Activated B cell treated with CpG ODN at 0.5 μM for 24 hours (primary cell): ENCODE measurements at regions of chr3 and their contacts with region 1.

Region 1: GRCh38 chr3:19263606-19264005 is 115.3 kb downstream of the KCNH8 start:
- DNase-seq: no peak
- ATAC-seq: no peak
- H3K4me3 Mint-ChIP-seq: no peak overlapping the region
- H3K27ac Mint-ChIP-seq: no peak overlapping the region
- H3K4me1 Mint-ChIP-seq: peaks cover 7% of the 10 kb centered on the region
- H3K27me3 Mint-ChIP-seq: no peaks in the 10 kb centered on the region
- CTCF ChIP-seq: no peak

Region 2: GRCh38 chr3:18389108-18389733 is 874.4 kb before region 1 on chr3:
- CTCF ChIA-PET with region 1: no interaction called
- POLR2A ChIA-PET with region 1: no interaction called
- intact Hi-C with region 1: no loop called
- DNase-seq: no peak
- ATAC-seq: no peak
- H3K4me3 Mint-ChIP-seq: no peak overlapping the region
- H3K27ac Mint-ChIP-seq: no peak overlapping the region
- H3K4me1 Mint-ChIP-seq: no peaks in the 10 kb centered on the region
- H3K27me3 Mint-ChIP-seq: no peaks in the 10 kb centered on the region
- CTCF ChIP-seq: peak; percentile 10

Region 3: DNA sequence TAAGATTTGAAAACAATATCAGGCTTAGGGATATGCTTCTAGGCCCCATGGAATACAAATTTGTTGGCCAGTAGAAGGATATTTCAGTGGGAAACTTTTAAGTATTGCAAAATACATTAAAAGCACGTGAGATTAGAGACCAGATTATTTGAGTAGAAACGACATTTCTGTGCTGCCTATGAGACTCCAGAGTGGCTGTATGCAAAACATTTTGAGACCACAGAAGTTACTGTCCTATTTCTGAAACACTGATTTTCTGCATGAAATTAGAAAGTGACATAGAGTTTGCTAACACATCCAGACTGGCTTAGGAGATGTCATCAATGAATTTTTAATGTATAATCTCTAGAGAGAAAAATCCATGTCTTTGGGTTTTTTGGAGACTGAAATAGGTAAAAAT is 15.5 kb before region 1 on chr3:
- CTCF ChIA-PET with region 1: no interaction called
- POLR2A ChIA-PET with region 1: no interaction called
- intact Hi-C with region 1: loop called (anchors 2 kb)
- DNase-seq: no peak
- ATAC-seq: no peak
- H3K4me3 Mint-ChIP-seq: no peak overlapping the region
- H3K27ac Mint-ChIP-seq: no peak overlapping the region
- H3K4me1 Mint-ChIP-seq: peaks cover 13% of the 10 kb centered on the region
- H3K27me3 Mint-ChIP-seq: no peaks in the 10 kb centered on the region
- CTCF ChIP-seq: no peak